Ascending aorta (tissue), 2 donors: ENCODE measurements at regions of chr22 and their contacts with region 1.

Region 1: DNA sequence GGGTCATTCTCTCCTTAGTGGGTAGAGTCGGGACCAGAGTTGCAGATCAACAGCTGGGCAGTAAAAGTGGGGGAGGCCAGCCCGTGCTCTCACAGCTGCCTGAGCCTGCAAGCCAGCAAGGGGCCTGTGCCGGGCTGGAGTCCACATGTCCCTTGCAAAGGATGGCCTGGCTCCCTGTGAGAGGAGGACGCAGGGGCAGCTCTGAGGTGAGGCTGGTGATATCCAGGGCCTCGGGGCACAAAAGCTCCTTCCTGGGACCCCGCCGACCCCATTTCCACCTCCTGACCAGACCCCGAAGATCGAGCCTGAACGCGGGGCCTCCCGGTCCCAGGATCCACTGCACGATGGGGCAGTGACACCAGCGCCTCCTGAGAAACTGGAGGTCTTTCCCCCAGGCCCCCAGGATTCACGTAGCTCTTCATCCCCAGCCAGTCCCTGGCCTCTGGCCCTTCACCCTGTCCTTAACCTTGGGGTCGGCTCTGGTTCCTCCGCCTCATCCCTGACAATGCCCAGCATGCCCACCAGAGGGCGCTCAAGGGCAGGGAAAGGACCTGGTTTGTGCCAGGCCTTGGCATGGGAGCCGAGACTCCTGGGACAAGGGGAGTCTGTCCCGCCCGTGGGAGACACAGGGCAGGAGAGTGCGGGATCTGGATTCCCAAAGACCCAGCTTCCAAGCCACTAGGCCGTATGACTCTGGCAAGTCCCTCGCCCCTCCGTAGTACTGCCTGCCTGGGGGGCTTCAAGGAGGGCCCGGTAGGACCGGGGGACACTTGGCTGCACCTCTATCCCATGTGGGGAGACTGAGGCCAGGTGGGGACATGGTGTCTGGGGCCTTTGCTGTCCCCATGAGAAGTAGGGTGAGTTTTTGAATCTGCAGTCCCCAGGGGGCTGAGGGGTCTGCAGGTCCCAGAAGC is 17.8 kb upstream of the WNT7B start:
- DNase-seq: peak in 1 of 2 donors; percentile 92
- H3K4me3 ChIP-seq: no peak overlapping the region
- H3K27ac ChIP-seq: no peak overlapping the region
- H3K4me1 ChIP-seq: peaks cover 11 to 30% of the 10 kb centered on the region in 2 donors
- H3K27me3 ChIP-seq: no peaks in the 10 kb centered on the region
- CTCF ChIP-seq: peak; percentile 97 to 98 (median 97)

Region 2: GRCh38 chr22:45842291-45842991 is 152.3 kb before region 1 on chr22:
- intact Hi-C with region 1: no loop called
- DNase-seq: no peak
- H3K4me3 ChIP-seq: no peak overlapping the region
- H3K27ac ChIP-seq: no peak overlapping the region
- H3K4me1 ChIP-seq: no peaks in the 10 kb centered on the region
- H3K27me3 ChIP-seq: no peaks in the 10 kb centered on the region
- CTCF ChIP-seq: no peak

Region 3: DNA sequence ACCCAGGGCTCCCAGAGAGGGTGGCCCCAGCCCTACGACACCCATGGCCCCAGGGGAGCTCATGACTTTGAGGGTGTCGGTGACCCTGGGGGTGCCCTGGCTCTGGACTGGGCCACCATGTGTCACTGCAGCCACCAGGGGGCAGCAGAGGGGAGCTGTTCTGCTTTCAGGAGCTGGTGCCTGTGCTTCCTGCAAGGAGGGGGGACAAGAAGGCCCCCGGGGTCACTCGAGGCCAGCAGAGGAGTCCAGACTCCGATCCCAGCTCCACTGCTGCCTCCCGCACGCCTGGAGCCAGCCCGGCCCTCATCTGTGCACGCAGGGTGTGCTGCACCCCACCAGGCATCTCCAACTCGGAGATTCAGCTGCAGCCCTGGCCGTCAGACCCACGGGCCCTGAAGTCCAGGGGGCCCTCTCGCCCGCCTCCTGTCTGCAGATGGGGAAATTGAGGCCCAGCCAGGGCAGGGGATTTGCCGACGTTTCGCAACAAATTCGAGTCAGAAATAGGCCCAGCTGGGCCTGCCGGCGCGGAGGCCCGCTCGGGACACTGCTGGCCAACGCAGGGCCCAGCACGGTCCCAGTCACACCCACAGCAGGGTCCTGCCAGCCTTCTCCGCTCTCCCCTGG is 11.7 kb after region 1 on chr22:
- intact Hi-C with region 1: loop called (anchors 1 kb)
- DNase-seq: peak; percentile 75 to 95
- H3K4me3 ChIP-seq: peak overlapping the region; percentile 31 to 37
- H3K27ac ChIP-seq: peak overlapping the region; percentile 97 to 99
- H3K4me1 ChIP-seq: peaks cover 21 to 28% of the 10 kb centered on the region in 2 donors
- H3K27me3 ChIP-seq: no peaks in the 10 kb centered on the region
- CTCF ChIP-seq: peak; percentile 90 to 98 (median 95)

Region 4: GRCh38 chr22:46116491-46116958 is 121.8 kb after region 1 on chr22:
- intact Hi-C with region 1: loop called (anchors 1 kb)
- DNase-seq: peak; percentile 67 to 97
- H3K4me3 ChIP-seq: no peak overlapping the region
- H3K27ac ChIP-seq: peak overlapping the region; percentile 72 to 94
- H3K4me1 ChIP-seq: peaks cover 9 to 31% of the 10 kb centered on the region in 2 donors
- H3K27me3 ChIP-seq: no peaks in the 10 kb centered on the region
- CTCF ChIP-seq: peak; percentile 96 to 98 (median 97)

Region 5: GRCh38 chr22:46309526-46310085 is 314.9 kb after region 1 on chr22:
- intact Hi-C with region 1: loop called (anchors 5 kb)
- DNase-seq: no peak
- H3K4me3 ChIP-seq: no peak overlapping the region
- H3K27ac ChIP-seq: no peak overlapping the region
- H3K4me1 ChIP-seq: no peaks in the 10 kb centered on the region
- H3K27me3 ChIP-seq: no peaks in the 10 kb centered on the region
- CTCF ChIP-seq: no peak

Region 6: GRCh38 chr22:46542011-46542985 is 547.5 kb after region 1 on chr22:
- intact Hi-C with region 1: loop called (anchors 5 kb)
- DNase-seq: peak in 1 of 2 donors; percentile 78
- H3K4me3 ChIP-seq: no peak overlapping the region
- H3K27ac ChIP-seq: no peak overlapping the region
- H3K4me1 ChIP-seq: peaks cover 8 to 21% of the 10 kb centered on the region in 2 donors
- H3K27me3 ChIP-seq: peaks cover 8% of the 10 kb centered on the region
- CTCF ChIP-seq: peak; percentile 76 to 85 (median 85)